ENCODE measurements at regions of chr20 and their contacts with region 1.

Region 1: DNA sequence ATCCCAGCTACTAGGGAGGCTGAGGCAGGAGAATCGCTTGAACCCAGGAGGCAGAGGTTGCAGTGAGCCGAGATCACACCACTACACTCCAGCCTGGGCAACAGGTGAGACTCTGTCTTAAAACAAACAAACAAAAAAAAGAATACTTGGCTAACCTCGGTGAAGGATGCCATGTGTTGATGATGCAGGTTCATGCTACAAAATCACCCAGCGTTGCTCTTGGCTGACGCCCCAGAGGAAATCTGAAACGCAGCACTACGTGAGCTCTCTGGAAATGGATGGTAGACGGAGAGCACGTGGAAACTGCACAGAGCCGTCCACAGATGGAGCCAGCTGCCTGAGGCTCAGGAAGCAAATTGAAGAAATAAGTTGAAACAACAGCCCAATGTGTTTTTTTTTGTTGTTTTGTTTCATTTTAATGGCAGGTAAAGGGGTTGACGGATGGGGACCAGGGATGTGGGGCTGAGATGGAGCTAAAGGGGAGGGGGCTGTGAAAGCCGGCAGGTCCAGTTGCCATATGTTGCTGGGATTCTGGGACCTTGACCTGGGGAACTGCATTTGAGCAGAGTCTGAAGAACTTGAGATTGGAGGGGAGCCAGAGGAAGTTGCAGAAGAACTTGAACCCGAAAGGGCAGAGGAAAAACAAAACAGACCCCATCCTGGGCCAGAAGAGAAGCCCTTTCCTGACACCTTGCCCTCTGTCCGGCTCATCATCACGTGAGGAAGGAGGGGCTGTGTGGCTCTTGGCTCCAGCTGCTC is 12.8 kb upstream of the MANBAL start:
- DNase-seq: peak; percentile 66
- H3K4me3 ChIP-seq: no peak overlapping the region
- H3K27ac ChIP-seq: no peak overlapping the region
- H3K4me1 ChIP-seq: peaks cover 4% of the 10 kb centered on the region
- H3K27me3 ChIP-seq: no peaks in the 10 kb centered on the region
- CTCF ChIP-seq: peak; percentile 28 to 45

Region 2: DNA sequence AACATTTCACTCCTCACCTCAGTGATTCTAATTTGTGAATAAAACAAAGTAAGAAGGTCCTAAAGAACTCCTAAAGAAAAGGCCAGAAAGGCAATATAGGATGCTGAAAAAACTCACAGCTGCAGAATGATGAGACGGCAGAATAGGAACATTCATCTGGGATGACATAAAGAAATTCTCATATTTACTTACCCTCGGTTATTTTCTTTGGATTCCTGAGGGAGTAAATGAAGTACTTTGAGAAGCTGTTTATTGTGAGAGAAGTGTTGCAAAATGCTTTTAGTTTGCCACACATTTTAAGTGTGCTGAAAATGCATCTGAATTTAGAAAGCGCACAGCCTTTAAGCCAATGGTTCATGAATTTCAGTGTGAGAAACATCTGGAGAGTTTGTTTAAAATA is 145.2 kb before region 1 on chr20:
- CTCF ChIA-PET with region 1: no interaction called
- dilution Hi-C with region 1: no loop called
- in situ Hi-C with region 1: no loop called
- intact Hi-C with region 1: no loop called
- DNase-seq: no peak
- H3K4me3 ChIP-seq: no peak overlapping the region
- H3K27ac ChIP-seq: no peak overlapping the region
- H3K4me1 ChIP-seq: no peaks in the 10 kb centered on the region
- H3K27me3 ChIP-seq: no peaks in the 10 kb centered on the region
- CTCF ChIP-seq: no peak

Region 3: DNA sequence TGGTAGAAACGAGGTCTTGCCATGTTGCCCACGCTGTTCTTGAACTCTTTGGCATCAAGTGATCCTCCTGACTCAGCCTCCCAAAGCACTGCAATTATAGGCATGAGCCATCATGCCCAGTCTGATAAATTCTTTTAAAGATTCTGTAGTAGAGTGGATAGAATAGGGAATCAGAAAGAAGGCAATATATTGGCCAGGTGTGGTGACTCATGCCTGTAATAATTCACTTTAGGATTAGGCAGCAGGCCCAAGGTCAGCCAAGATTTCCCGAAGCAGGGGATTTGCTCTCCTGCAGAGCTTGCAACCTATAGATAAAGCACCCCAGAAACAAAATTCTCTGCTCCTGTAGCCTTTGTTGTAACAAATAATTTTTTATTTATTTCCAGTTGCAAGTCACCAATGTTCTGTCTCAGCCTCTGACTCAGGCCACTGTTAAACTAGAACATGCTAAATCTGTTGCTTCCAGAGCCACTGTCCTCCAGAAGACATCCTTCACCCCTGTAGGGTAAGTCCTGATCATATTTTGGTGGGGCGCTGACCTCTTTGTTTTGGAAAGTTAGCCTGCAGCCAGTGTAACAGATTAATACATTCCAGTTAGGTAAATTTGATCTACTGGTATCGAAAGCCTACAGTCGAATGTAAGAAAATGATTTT is 66.9 kb before region 1 on chr20:
- CTCF ChIA-PET with region 1: interaction called, 14 read pairs
- dilution Hi-C with region 1: no loop called
- in situ Hi-C with region 1: no loop called
- intact Hi-C with region 1: no loop called
- DNase-seq: peak; percentile 67
- H3K4me3 ChIP-seq: no peak overlapping the region
- H3K27ac ChIP-seq: no peak overlapping the region
- H3K4me1 ChIP-seq: peaks cover 9% of the 10 kb centered on the region
- H3K27me3 ChIP-seq: no peaks in the 10 kb centered on the region
- CTCF ChIP-seq: no peak

Measured in mammary epithelial cell (primary cell).